Left cardiac atrium (tissue), 4 donors: ENCODE measurements at regions of chr6 and their contacts with region 1.

Region 1: GRCh38 chr6:41002216-41002615 is 36.8 kb downstream of the UNC5CL start:
- DNase-seq: no peak
- ATAC-seq: no peak

Region 2: DNA sequence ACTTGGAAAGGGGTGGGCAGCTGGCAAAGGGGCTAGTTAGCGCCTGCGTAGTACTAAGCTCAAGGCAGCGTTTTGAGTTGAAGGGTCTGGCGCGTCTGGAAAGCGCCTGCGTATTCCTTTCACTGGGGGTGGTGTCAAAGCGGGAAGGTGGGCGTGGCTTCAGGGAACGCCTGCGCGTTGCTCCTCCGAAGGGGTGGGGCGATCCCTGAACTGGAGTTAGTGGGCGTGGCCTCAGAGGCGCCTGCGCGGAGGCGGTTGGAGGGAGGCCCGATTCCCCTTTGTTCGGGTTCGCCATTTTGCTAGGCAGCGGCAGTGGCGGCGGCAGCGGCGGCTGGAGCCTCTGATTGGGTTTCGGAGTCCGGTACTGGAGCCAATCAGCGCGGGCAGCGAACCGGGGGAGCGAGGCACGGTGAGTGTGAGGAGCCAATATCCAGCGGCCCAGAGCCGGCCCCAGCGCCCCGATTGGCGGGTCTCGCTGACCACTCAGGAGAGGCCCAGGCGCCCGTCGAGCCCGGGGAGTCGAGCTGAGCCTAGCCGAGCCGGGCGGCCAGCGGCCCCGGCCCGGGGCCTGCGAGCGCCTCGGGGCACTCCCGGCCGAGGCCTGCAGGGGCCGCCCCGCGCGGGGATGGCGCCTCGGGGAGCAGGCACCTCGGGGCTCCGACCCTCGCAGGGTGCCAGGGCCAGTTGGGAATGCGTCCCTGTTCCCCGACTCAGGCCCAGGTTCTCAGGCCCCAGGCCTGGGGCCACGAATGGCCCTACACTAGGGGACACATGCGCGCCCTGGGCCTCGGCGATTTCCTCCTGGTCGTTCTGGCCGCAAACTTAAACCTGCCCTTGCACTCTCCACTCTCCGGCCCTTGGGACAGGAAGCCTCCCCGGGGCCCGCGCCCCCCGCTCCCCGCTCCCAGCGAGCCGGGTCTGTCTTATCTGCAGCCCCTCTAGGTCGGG is 70.7 kb after region 1 on chr6 and contains the start of gene NFYA:
- intact Hi-C with region 1: loop called in 1 of 2 experiments (anchors 2 kb)
- DNase-seq: peak; percentile 100
- ATAC-seq: peak; percentile 81 to 86
- total RNA-seq, gene NFYA: 11.5 to 11.8 TPM

Region 3: GRCh38 chr6:41732591-41733359 is 730.6 kb after region 1 on chr6:
- intact Hi-C with region 1: no loop called
- DNase-seq: no peak
- ATAC-seq: no peak